Activated CD4-positive, alpha-beta T cell treated with anti-CD3 and anti-CD28 coated beads for 36 hours (primary cell): ENCODE measurements at regions of chr14 and their contacts with region 1.

Region 1: GRCh38 chr14:85856430-85856829 is 326.5 kb downstream of the FLRT2 start:
- DNase-seq: no peak
- ATAC-seq: no peak
- H3K4me3 Mint-ChIP-seq: no peak overlapping the region
- H3K27ac Mint-ChIP-seq: no peak overlapping the region
- H3K4me1 Mint-ChIP-seq: no peaks in the 10 kb centered on the region
- H3K27me3 Mint-ChIP-seq: peaks cover 5% of the 10 kb centered on the region

Region 2: DNA sequence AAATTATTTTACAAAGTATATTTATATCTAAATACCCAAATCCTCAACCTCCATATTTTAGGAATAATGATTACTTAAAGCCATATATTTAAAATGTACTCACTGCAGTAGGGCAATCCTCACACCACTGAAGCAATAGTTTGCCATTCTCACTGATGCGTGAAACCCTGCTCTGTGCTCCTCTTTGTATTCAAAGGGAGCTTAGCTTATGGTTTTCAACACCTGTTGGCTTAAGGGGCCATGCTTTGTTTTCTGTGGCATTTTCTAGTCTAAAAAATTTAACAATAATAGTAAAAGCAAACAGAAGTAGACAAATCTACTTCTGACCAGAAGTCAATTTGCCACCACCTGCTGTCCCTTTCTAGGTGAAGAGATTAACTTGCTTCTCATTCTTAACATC is 31.9 kb before region 1 on chr14:
- CTCF ChIA-PET with region 1: no interaction called
- POLR2A ChIA-PET with region 1: no interaction called
- intact Hi-C with region 1: no loop called
- DNase-seq: no peak
- ATAC-seq: no peak
- H3K4me3 Mint-ChIP-seq: no peak overlapping the region
- H3K27ac Mint-ChIP-seq: no peak overlapping the region
- H3K4me1 Mint-ChIP-seq: no peaks in the 10 kb centered on the region
- H3K27me3 Mint-ChIP-seq: no peaks in the 10 kb centered on the region

Region 3: DNA sequence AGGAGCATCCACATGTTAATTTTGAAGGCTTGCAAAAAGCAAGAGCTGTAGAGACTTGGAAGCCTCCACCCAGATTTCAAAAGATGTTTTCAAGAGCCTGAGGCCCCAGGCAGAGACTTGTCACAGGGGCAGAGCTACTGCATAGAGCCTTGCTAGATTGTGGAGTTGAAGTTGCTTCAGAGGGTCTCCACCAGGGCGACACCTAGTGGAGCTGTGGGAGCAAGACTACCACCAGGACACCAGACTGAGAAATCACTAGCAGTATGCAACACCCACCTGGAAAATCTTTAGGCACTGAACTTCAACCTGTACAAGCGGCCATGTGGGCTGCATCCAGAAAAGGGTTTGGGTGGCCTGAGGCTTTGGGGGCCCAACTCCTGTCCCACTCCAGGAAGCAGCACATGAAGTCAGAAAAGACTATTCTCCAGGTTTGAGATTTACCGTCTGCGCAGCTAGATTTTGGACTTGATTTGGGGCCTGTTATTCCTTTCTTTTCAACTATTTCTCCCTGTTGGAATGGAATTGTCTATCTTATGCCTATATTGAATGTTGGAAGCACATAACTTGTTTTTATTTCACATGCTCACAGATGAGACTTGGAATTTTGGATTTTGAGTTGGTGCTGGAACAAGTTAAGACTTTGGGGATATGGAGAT is 182.1 kb after region 1 on chr14:
- CTCF ChIA-PET with region 1: no interaction called
- POLR2A ChIA-PET with region 1: no interaction called
- intact Hi-C with region 1: loop called in 1 of 2 experiments (anchors 5 kb)
- DNase-seq: peak; percentile 65
- ATAC-seq: peak; percentile 83
- H3K4me3 Mint-ChIP-seq: no peak overlapping the region
- H3K27ac Mint-ChIP-seq: no peak overlapping the region
- H3K4me1 Mint-ChIP-seq: no peaks in the 10 kb centered on the region
- H3K27me3 Mint-ChIP-seq: no peaks in the 10 kb centered on the region

Region 4: GRCh38 chr14:86057018-86057667 is 200.7 kb after region 1 on chr14:
- CTCF ChIA-PET with region 1: no interaction called
- POLR2A ChIA-PET with region 1: no interaction called
- intact Hi-C with region 1: loop called in 1 of 2 experiments (anchors 5 kb)
- DNase-seq: peak; percentile 60
- ATAC-seq: no peak
- H3K4me3 Mint-ChIP-seq: no peak overlapping the region
- H3K27ac Mint-ChIP-seq: no peak overlapping the region
- H3K4me1 Mint-ChIP-seq: no peaks in the 10 kb centered on the region
- H3K27me3 Mint-ChIP-seq: no peaks in the 10 kb centered on the region